Tibial artery (tissue), 4 donors: ENCODE measurements at regions of chr7 and their contacts with region 1.

Region 1: GRCh38 chr7:151110941-151111645 is 24.8 kb downstream of the AGAP3 start:
- DNase-seq: peak; percentile 79 to 88
- H3K4me3 ChIP-seq: no peak overlapping the region
- H3K27ac ChIP-seq: no peak overlapping the region
- H3K4me1 ChIP-seq: peaks cover 0 to 25% (median 11%) of the 10 kb centered on the region in 4 donors
- H3K27me3 ChIP-seq: no peaks in the 10 kb centered on the region
- CTCF ChIP-seq: peak; percentile 89 to 90

Region 2: GRCh38 chr7:151017953-151018420 is 93.1 kb before region 1 on chr7:
- intact Hi-C with region 1: loop called (anchors 10 kb)
- DNase-seq: peak in 1 of 2 donors; percentile 56
- H3K4me3 ChIP-seq: peak overlapping the region in 1 of 2 donors; percentile 35
- H3K27ac ChIP-seq: no peak overlapping the region
- H3K4me1 ChIP-seq: peaks cover 0 to 33% (median 26%) of the 10 kb centered on the region in 4 donors
- H3K27me3 ChIP-seq: peaks cover 0 to 85% of the 10 kb centered on the region in 2 donors
- CTCF ChIP-seq: peak; percentile 74 to 87

Region 3: DNA sequence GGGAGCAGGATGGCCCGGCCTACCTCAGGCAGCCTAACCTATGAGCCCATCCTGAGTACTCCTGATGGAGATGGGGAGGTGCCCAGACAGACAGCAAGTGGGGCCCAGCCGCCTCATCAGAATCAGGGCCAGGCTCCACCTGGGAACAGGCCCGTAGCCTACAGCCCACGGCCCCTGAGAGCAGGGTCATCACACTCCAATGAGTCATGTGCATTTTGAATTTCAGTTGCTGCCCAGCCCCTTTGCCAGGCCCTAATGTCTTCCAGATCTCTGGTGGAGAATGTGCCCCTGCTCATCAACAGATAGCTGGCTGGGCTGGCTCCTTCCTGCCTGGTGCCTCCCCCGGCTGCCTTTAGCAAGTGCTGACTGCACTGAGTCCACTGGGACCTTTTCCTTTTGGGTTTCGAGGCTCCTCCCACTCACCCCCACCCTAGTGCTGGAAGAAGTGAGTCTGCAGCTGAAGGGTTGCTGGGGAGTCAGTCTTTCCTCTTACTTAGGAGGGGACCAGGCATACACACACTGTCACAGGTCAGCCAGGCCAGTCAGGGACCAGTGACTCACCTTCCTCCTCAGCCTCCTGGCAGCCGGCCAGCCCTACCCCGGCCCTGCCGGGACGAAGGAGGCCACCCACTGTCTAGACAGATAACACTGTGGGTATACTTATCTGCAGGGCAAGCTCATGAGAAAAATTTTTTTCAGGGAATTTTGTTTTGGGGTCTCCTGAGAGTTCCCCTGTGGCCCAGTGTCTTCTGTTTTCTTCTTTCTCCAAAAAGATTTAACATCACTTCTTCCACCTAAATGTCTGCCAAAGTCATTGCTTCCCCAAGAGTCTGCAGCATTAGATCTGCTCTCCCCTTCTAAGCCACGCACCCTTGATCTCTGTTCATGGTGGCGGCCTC is 71.9 kb before region 1 on chr7:
- intact Hi-C with region 1: loop called (anchors 5 kb)
- DNase-seq: peak; percentile 74 to 80
- H3K4me3 ChIP-seq: no peak overlapping the region
- H3K27ac ChIP-seq: peak overlapping the region; percentile 52 to 61
- H3K4me1 ChIP-seq: peaks cover 0 to 14% (median 11%) of the 10 kb centered on the region in 4 donors
- H3K27me3 ChIP-seq: no peaks in the 10 kb centered on the region
- CTCF ChIP-seq: no peak

Region 4: GRCh38 chr7:151085691-151086620 is 25.1 kb before region 1 on chr7 and contains the start of gene AGAP3:
- intact Hi-C with region 1: loop called (anchors 2 kb)
- DNase-seq: peak; percentile 89 to 96
- H3K4me3 ChIP-seq: peak within 1 kb of the TSS; percentile 76 to 94
- H3K27ac ChIP-seq: peak within 1 kb of the TSS; percentile 82 to 86
- H3K4me1 ChIP-seq: peaks cover 0 to 69% (median 46%) of the 10 kb centered on the region in 4 donors
- H3K27me3 ChIP-seq: no peaks in the 10 kb centered on the region
- CTCF ChIP-seq: no peak